ENCODE measurements at regions of chr16 and their contacts with region 1.

Region 1: DNA sequence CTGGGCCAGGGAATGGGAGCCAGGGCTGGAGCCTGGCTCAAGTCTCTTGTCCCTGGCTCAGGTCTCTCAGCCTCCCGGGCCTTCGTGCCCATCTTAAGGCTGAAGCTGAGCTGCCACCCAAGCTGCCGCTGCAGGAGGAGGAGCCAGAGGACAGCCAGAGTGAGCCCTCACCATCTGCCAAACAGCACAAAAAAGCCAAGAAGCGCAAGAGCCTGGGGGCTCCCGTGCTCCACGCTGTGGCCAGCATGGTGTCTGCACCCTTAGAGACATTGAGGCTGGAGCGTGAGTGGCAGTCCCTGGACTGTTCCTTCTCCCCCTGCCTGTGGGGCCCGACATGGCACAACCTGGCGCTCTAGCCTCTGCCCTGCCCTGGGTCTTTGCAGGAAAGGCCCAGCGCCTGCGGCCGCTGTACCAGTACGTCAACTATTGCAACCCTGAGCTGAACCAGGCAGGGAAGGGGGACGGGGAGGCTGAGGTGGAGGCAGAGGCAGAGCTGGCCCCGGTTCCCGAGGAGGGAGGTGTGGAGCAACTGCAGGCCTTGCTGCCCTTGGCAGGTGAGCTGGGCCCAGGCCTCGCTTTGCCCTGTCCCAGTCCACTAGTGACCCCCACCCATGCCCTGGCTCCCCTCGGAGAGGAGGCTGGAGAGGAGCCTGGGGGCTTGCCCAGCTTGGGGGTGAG is 1.3 kb downstream of the C16orf86 start:
- DNase-seq: peak; percentile 89
- ATAC-seq: peak; percentile 92
- H3K4me3 ChIP-seq: no peak overlapping the region
- H3K27ac ChIP-seq: no peak overlapping the region; the same call in 1 of the 2 replicates
- H3K4me1 ChIP-seq: peaks cover 12% of the 10 kb centered on the region
- H3K27me3 ChIP-seq: no peaks in the 10 kb centered on the region
- CTCF ChIP-seq: peak; percentile 97
- POLR2A ChIP-seq: no peak
- RAD21 ChIP-seq: peak; percentile 83

Region 2: DNA sequence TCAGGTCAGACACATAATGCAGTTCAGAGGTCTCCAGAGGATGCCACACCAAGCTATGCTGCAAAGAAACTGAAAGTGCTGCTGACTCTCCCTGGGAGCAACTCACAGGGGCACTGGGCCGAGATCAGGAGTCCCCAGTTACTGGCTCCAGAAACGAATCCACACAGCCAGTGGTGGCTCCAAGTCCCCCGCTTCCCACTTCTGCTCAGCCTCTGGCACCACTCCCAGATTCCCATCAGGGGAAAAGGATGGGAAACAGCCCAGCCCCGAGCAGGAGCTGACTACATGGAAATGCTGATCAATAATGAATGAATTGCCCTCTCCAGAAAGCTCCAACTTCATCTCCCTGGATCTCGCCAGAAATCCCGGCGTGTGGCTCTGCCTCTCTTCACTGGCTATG is 1363.8 kb before region 1 on chr16:
- CTCF ChIA-PET with region 1: no interaction called
- POLR2A ChIA-PET with region 1: no interaction called
- dilution Hi-C with region 1: no loop called
- in situ Hi-C with region 1: no loop called
- intact Hi-C with region 1: no loop called
- DNase-seq: no peak
- ATAC-seq: no peak
- H3K4me3 ChIP-seq: no peak overlapping the region
- H3K27ac ChIP-seq: no peak overlapping the region
- H3K4me1 ChIP-seq: no peaks in the 10 kb centered on the region
- H3K27me3 ChIP-seq: peaks cover 65% of the 10 kb centered on the region
- CTCF ChIP-seq: no peak
- POLR2A ChIP-seq: no peak
- RAD21 ChIP-seq: no peak

Region 3: GRCh38 chr16:67378642-67379041 is 289.3 kb before region 1 on chr16:
- CTCF ChIA-PET with region 1: no interaction called
- POLR2A ChIA-PET with region 1: no interaction called
- dilution Hi-C with region 1: no loop called
- in situ Hi-C with region 1: no loop called
- intact Hi-C with region 1: no loop called
- DNase-seq: peak; percentile 67
- ATAC-seq: peak; percentile 59
- H3K4me3 ChIP-seq: no peak overlapping the region
- H3K27ac ChIP-seq: no peak overlapping the region
- H3K4me1 ChIP-seq: peaks cover 12% of the 10 kb centered on the region
- H3K27me3 ChIP-seq: peaks cover 9% of the 10 kb centered on the region
- CTCF ChIP-seq: no peak
- POLR2A ChIP-seq: no peak
- RAD21 ChIP-seq: no peak

Region 4: DNA sequence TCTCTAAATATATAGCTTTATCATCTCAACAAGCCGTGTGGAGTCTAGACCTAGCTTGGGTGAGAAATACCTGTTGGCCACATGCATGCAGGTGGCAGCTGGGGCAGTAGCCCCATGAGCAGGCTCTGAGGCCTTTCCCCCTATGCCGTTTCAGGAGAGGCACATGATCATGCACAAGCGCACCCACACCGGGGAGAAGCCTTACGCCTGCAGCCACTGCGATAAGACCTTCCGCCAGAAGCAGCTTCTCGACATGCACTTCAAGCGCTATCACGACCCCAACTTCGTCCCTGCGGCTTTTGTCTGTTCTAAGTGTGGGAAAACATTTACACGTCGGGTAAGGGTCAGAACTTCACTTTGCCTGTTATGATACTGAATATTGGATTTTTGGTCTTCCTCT is 39.7 kb before region 1 on chr16:
- CTCF ChIA-PET with region 1: no interaction called
- POLR2A ChIA-PET with region 1: no interaction called
- dilution Hi-C with region 1: no loop called
- in situ Hi-C with region 1: no loop called
- intact Hi-C with region 1: no loop called
- DNase-seq: no peak
- ATAC-seq: no peak
- H3K4me3 ChIP-seq: no peak overlapping the region
- H3K27ac ChIP-seq: no peak overlapping the region
- H3K4me1 ChIP-seq: peaks cover 5% of the 10 kb centered on the region
- H3K27me3 ChIP-seq: no peaks in the 10 kb centered on the region
- CTCF ChIP-seq: no peak
- POLR2A ChIP-seq: no peak
- RAD21 ChIP-seq: no peak

Region 5: DNA sequence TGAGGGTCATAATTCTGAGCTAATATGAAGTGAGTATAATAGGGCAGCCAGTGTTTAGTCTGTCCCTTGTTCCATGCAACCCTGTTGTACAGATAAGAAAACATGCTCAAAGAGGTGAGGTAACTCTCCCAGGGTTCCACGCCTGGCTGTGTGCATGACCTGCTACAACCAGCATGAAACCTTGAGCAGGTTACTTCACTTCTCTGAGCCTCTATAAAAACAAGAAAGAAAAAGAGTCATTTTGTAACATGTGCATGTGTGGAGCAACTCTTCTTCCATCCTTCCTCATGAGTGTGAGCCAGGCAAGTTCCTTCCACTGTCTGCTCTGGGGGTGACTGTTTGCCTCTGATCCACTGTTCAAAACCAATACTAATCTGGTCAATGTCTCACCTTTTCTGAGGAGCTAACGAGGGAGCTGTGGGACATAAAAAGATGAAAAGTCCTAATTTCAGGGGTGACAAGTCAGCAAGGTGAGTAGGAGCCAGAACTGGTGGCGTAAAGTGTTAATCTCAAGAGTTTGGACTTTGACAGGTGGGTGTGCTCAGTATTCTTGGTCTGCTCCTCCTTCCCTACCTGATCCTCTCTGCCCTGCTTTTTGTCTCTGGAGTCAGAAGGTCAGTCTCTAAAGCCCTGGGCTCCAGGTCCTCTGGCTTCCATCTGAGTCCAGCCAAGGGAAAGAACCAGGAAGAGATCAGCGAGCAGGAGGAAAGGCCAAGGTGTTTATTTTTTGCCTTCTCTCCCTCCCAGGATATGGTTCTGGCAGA is 29.6 kb after region 1 on chr16:
- CTCF ChIA-PET with region 1: no interaction called
- POLR2A ChIA-PET with region 1: interaction called, 13 read pairs
- dilution Hi-C with region 1: no loop called
- in situ Hi-C with region 1: no loop called
- intact Hi-C with region 1: no loop called
- DNase-seq: no peak
- ATAC-seq: no peak
- H3K4me3 ChIP-seq: no peak overlapping the region
- H3K27ac ChIP-seq: no peak overlapping the region
- H3K4me1 ChIP-seq: no peaks in the 10 kb centered on the region
- H3K27me3 ChIP-seq: no peaks in the 10 kb centered on the region
- CTCF ChIP-seq: no peak
- POLR2A ChIP-seq: no peak
- RAD21 ChIP-seq: no peak

Region 6: GRCh38 chr16:68319185-68319908 is 651.4 kb after region 1 on chr16:
- CTCF ChIA-PET with region 1: no interaction called
- POLR2A ChIA-PET with region 1: no interaction called
- dilution Hi-C with region 1: no loop called
- in situ Hi-C with region 1: no loop called
- intact Hi-C with region 1: no loop called
- DNase-seq: peak; percentile 7
- ATAC-seq: no peak
- H3K4me3 ChIP-seq: no peak overlapping the region
- H3K27ac ChIP-seq: no peak overlapping the region
- H3K4me1 ChIP-seq: no peaks in the 10 kb centered on the region
- H3K27me3 ChIP-seq: no peaks in the 10 kb centered on the region
- CTCF ChIP-seq: no peak
- POLR2A ChIP-seq: no peak
- RAD21 ChIP-seq: no peak